ENCODE measurements at regions of chr1 and their contacts with region 1.

Region 1: GRCh38 chr1:202189001-202189790 is 4.4 kb upstream of the LGR6 start:
- DNase-seq: peak; percentile 26 to 96 (median 80)

Region 2: GRCh38 chr1:202315576-202316168 is 126.5 kb after region 1 on chr1:
- intact Hi-C with region 1: loop called (anchors 1 kb)
- DNase-seq: peak; percentile 67 to 96 (median 80)

Region 3: GRCh38 chr1:202713110-202713509 is 523.9 kb after region 1 on chr1:
- intact Hi-C with region 1: loop called (anchors 2 kb)
- DNase-seq: no peak

Measured in posterior cingulate gyrus (tissue), 11 donors.